ENCODE measurements at regions of chr10 and their contacts with region 1.

Region 1: DNA sequence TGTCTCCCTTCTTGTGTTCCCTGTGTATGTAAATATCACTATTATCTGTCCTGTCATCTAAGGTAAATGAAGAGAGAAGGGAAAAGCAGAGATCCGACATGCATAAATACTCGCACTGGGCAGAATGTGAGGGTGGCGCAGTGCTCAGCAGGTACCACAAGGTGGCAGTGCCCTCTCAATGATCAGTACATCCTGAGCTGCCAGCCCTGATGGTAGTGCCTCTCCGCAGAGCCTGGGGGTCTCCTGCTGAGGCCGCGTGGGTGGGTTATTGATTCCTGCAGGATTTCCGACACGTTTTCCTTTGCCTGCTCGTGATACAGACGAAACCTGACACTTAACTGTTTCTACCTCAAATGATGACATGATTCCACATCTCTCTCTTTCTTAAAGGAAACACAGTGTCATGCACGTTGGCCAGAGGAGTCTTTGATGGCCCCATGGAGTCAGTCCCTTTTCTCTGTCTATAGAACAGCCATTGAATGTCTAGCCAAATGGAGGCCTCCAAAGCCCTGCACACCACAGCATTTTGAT is 19.8 kb downstream of the RGR start:
- DNase-seq: peak; percentile 71
- H3K4me3 ChIP-seq: no peak overlapping the region
- H3K27ac ChIP-seq: no peak overlapping the region
- H3K27me3 ChIP-seq: no peaks in the 10 kb centered on the region
- CTCF ChIP-seq: peak; percentile 97

Region 2: GRCh38 chr10:84537447-84537931 is 272.8 kb after region 1 on chr10:
- in situ Hi-C with region 1: loop called (anchors 25 kb)
- DNase-seq: peak; percentile 56
- H3K4me3 ChIP-seq: no peak overlapping the region
- H3K27ac ChIP-seq: no peak overlapping the region
- H3K27me3 ChIP-seq: no peaks in the 10 kb centered on the region
- CTCF ChIP-seq: peak; percentile 66

Measured in brain microvascular endothelial cell (primary cell).